SK-N-SH (cell line): ENCODE measurements at regions of chr12 and their contacts with region 1.

Region 1: DNA sequence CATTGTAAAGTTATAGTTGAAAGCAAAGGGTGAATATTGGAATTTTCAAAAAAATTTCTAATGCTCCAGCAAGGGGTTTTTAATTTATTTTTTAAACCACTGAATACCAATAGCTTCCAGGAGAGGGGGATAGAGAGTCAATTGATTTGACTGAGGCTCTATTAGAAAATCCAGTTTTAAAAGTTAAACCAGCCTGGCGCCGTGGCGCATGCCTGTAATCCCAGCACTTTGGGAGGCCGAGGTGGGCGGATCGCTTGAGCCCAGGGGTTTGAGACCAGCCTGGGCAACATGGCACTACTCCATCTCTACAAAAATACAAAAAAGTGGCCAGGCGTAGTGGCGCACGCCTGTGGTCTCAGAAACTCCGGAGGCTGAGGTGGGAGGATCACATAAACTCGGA is 150.1 kb downstream of the SLC38A4 start:
- DNase-seq: peak; percentile 21
- H3K4me3 ChIP-seq: no peak overlapping the region; a peak in 1 of 4 replicates
- H3K27ac ChIP-seq: no peak overlapping the region
- H3K4me1 ChIP-seq: peaks cover 0 to 31% of the 10 kb centered on the region in 2 experiments; a peak in 1 of 4 replicates
- H3K27me3 ChIP-seq: no peaks in the 10 kb centered on the region
- CTCF ChIP-seq: peak; percentile 79
- EP300 ChIP-seq: no peak
- RAD21 ChIP-seq: peak; percentile 49

Region 2: DNA sequence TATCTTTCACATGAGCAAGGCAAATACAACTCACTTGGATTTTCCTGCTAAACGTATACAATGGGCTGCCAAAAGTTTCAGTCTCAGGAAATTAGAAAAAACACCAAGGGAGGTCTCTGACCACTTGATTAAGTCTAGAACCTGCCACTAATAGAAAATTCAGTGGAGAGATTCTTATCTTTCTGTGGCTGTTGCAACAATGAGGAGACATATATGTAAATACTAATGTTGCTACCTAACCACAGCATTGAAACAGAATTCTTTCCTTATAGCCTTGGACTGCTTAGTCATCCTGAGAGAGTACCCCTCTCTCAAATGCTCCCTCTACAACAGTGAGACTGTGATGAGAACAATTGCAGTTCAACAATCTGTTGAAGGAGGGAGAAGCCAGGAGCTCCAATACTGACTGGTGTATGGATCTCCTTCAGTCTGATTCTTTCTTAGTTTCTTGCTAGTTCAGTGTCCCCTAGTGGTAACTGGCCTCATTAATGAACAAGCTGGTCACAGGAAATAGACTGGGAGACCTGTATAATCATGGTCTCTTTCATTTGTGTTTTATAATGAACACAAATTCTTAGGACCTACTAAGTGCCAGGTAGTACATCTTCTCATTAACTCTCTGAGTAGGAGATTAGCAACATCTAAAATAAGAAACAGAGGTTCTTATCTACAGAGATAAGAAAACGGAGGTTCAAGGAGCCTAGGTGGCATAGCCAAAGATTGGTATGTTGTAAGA is 14.5 kb before region 1 on chr12:
- CTCF ChIA-PET with region 1: interaction called, 12 read pairs
- POLR2A ChIA-PET with region 1: no interaction called
- DNase-seq: peak; percentile 39
- H3K4me3 ChIP-seq: no peak overlapping the region
- H3K27ac ChIP-seq: peak overlapping the region; percentile 69 to 83; a peak in 3 of 4 replicates
- H3K4me1 ChIP-seq: peaks cover 0 to 56% of the 10 kb centered on the region in 2 experiments
- H3K27me3 ChIP-seq: no peaks in the 10 kb centered on the region
- CTCF ChIP-seq: peak; percentile 81
- EP300 ChIP-seq: no peak; a peak in 1 of 4 replicates
- RAD21 ChIP-seq: peak; percentile 84

Region 3: GRCh38 chr12:46686267-46686942 is 10.7 kb after region 1 on chr12:
- CTCF ChIA-PET with region 1: interaction called, 13 read pairs
- POLR2A ChIA-PET with region 1: no interaction called
- DNase-seq: no peak
- H3K4me3 ChIP-seq: no peak overlapping the region
- H3K27ac ChIP-seq: no peak overlapping the region
- H3K4me1 ChIP-seq: no peaks in the 10 kb centered on the region
- H3K27me3 ChIP-seq: no peaks in the 10 kb centered on the region
- CTCF ChIP-seq: no peak
- EP300 ChIP-seq: no peak
- RAD21 ChIP-seq: no peak